ENCODE measurements at regions of chr1 and their contacts with region 1.

Region 1: DNA sequence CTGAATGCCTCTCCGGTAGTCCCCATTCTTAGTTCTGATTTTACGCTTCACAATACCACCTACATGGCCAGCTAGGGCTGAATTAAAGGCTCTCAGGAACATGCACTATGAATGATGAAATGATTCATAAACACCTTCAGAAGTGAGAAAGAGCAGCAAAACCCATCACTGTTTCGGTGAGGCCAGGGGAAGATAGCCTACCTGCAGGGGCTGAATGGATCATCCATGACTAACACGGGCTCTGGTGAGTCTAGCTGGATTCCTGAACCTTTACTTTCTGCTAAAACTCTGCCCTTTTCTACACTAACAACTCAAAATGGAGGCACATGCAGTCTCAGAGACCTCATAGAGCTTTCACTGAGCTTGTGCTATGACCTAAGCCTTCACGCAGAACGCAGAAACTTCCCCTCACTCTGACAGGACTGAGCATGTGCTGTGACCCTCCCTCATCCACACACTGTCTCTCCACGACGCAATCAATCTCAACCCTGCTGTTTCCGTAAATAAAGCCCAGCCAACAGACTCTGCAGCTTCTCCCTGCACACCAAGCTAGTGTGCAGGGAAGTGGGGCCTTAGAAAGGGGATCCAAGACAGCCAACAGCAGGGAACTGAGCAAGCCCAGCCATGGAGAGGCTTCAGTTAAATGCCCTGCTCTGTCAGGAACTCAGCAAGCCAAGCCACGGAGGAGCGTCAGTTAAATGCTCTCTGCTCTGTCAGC is 207.8 kb downstream of the SLC45A1 start:
- DNase-seq: peak; percentile 65
- H3K4me3 Mint-ChIP-seq: no peak overlapping the region
- H3K27ac Mint-ChIP-seq: no peak overlapping the region
- H3K4me1 Mint-ChIP-seq: peaks cover 38% of the 10 kb centered on the region
- H3K27me3 Mint-ChIP-seq: no peaks in the 10 kb centered on the region

Region 2: DNA sequence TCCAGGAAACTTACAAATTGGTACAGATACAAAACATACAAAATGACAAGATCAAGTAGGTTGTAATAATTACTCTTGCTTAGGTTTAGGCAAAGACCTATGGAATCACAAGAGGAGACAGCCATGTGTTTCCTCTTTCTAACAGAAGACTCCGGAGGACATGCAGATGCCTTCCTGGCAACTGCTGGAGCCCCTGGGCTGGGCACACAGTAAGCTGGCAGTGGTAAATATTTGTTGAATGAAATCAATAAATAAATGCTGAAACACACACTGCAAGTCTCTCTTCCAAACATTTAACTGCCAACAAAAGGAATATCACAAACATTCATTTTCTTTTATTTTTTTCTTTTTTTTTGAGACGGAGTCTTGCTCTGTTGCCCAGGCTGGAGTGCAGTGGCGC is 58.4 kb before region 1 on chr1:
- intact Hi-C with region 1: no loop called
- DNase-seq: no peak
- H3K4me3 Mint-ChIP-seq: no peak overlapping the region
- H3K27ac Mint-ChIP-seq: no peak overlapping the region
- H3K4me1 Mint-ChIP-seq: peaks cover 23% of the 10 kb centered on the region
- H3K27me3 Mint-ChIP-seq: no peaks in the 10 kb centered on the region

Region 3: DNA sequence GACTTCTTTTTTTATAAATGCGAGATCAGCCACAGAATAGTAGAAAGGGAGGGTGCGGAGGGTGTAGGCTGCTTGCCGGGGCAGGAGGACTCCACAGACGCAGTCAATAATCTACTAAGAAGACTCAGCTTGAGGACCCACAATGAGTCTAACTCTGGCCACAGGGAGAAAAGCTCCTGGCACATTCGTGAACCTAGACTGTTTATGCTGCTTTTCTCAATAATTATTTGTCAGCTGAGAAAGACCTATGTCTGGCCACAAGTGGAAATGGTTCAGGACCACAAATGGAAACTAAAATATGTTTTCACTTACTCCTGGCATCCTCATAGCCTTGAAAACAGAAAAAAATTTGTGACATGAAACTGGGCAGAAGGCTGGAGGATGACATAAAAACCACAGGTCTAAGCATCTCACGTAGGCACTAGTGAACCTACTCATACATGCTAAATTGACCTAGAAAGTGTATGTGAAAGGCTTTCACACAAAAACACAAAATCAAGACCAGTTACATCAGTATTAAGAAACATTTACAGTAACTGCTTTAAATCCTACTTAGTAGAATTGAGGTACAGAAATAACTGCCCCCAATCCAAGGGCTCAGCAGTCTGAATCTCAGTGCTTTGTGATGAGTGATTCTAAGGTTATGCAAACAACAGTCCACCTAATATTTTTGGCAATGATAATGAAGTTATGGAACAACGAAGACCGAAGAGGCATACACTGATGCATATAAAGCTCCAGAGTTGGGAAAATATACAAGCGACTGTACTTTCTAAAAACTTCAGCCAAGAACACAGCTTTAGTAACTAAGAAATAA is 48.3 kb before region 1 on chr1:
- intact Hi-C with region 1: loop called (anchors 1 kb)
- DNase-seq: no peak
- H3K4me3 Mint-ChIP-seq: peak overlapping the region; percentile 47
- H3K27ac Mint-ChIP-seq: peak overlapping the region; percentile 88
- H3K4me1 Mint-ChIP-seq: peaks cover 62% of the 10 kb centered on the region
- H3K27me3 Mint-ChIP-seq: no peaks in the 10 kb centered on the region

Region 4: GRCh38 chr1:8540261-8540941 is 14.7 kb after region 1 on chr1:
- intact Hi-C with region 1: loop called (anchors 1 kb)
- DNase-seq: no peak
- H3K4me3 Mint-ChIP-seq: peak overlapping the region; percentile 54
- H3K27ac Mint-ChIP-seq: peak overlapping the region; percentile 86
- H3K4me1 Mint-ChIP-seq: peaks cover 53% of the 10 kb centered on the region
- H3K27me3 Mint-ChIP-seq: no peaks in the 10 kb centered on the region

Region 5: GRCh38 chr1:8679395-8679800 is 153.7 kb after region 1 on chr1:
- intact Hi-C with region 1: loop called (anchors 5 kb)
- DNase-seq: no peak
- H3K4me3 Mint-ChIP-seq: no peak overlapping the region
- H3K27ac Mint-ChIP-seq: no peak overlapping the region
- H3K4me1 Mint-ChIP-seq: peaks cover 52% of the 10 kb centered on the region
- H3K27me3 Mint-ChIP-seq: no peaks in the 10 kb centered on the region

Measured in activated T-helper 2 cell treated with anti-CD3 and anti-CD28 coated beads, Interferon-gamma antibody, Interleukin-2, Interleukin-4, amounts not matched to agents 10 μg/mL and 5 μg/mL and 100 μg/mL, durations not matched to agents 14 hours and 24 hours and 36 hours (primary cell).